ENCODE measurements at regions of chr11 and their contacts with region 1.

Region 1: GRCh38 chr11:66638177-66639065 is at the start of gene RBM4:
- DNase-seq: peak; percentile 90 to 99 (median 94)
- ATAC-seq: peak; percentile 89
- H3K4me3 ChIP-seq: peak within 1 kb of the TSS; percentile 82
- H3K4me3 Mint-ChIP-seq: peak within 1 kb of the TSS; percentile 97
- H3K27ac ChIP-seq: peak within 1 kb of the TSS; percentile 94
- H3K27ac Mint-ChIP-seq: peak within 1 kb of the TSS; percentile 89
- H3K4me1 ChIP-seq: peaks cover 62% of the 10 kb centered on the region
- H3K4me1 Mint-ChIP-seq: peaks cover 73% of the 10 kb centered on the region
- H3K27me3 ChIP-seq: no peaks in the 10 kb centered on the region
- H3K27me3 Mint-ChIP-seq: no peaks in the 10 kb centered on the region
- CTCF ChIP-seq: no peak
- total RNA-seq, gene RBM4: 194 to 197 TPM

Region 2: GRCh38 chr11:66421492-66422205 is 216.8 kb before region 1 on chr11:
- CTCF ChIA-PET with region 1: no interaction called
- POLR2A ChIA-PET with region 1: interaction called, 12 read pairs
- intact Hi-C with region 1: no loop called
- DNase-seq: peak; percentile 78 to 95 (median 86)
- ATAC-seq: peak; percentile 97
- H3K4me3 ChIP-seq: no peak overlapping the region
- H3K4me3 Mint-ChIP-seq: no peak overlapping the region
- H3K27ac ChIP-seq: no peak overlapping the region
- H3K27ac Mint-ChIP-seq: peak overlapping the region; percentile 45
- H3K4me1 ChIP-seq: peaks cover 11% of the 10 kb centered on the region
- H3K4me1 Mint-ChIP-seq: peaks cover 6% of the 10 kb centered on the region
- H3K27me3 ChIP-seq: peaks cover 26 to 37% of the 10 kb centered on the region in 2 experiments
- H3K27me3 Mint-ChIP-seq: peaks cover 40% of the 10 kb centered on the region
- CTCF ChIP-seq: no peak

Region 3: GRCh38 chr11:66568124-66568916 is 70.1 kb before region 1 on chr11 and contains the start of gene CTSF:
- CTCF ChIA-PET with region 1: no interaction called
- POLR2A ChIA-PET with region 1: interaction called, 17 read pairs
- intact Hi-C with region 1: no loop called
- DNase-seq: peak; percentile 50 to 82 (median 65)
- ATAC-seq: peak; percentile 93
- H3K4me3 ChIP-seq: peak within 1 kb of the TSS; percentile 46
- H3K4me3 Mint-ChIP-seq: peak within 1 kb of the TSS; percentile 77
- H3K27ac ChIP-seq: no peak within 1 kb of the TSS
- H3K27ac Mint-ChIP-seq: no peak within 1 kb of the TSS
- H3K4me1 ChIP-seq: peaks cover 12% of the 10 kb centered on the region
- H3K4me1 Mint-ChIP-seq: no peaks in the 10 kb centered on the region
- H3K27me3 ChIP-seq: no peaks in the 10 kb centered on the region
- H3K27me3 Mint-ChIP-seq: peaks cover 7% of the 10 kb centered on the region
- CTCF ChIP-seq: no peak
- total RNA-seq, gene CTSF: 16.0 to 16.8 TPM

Region 4: DNA sequence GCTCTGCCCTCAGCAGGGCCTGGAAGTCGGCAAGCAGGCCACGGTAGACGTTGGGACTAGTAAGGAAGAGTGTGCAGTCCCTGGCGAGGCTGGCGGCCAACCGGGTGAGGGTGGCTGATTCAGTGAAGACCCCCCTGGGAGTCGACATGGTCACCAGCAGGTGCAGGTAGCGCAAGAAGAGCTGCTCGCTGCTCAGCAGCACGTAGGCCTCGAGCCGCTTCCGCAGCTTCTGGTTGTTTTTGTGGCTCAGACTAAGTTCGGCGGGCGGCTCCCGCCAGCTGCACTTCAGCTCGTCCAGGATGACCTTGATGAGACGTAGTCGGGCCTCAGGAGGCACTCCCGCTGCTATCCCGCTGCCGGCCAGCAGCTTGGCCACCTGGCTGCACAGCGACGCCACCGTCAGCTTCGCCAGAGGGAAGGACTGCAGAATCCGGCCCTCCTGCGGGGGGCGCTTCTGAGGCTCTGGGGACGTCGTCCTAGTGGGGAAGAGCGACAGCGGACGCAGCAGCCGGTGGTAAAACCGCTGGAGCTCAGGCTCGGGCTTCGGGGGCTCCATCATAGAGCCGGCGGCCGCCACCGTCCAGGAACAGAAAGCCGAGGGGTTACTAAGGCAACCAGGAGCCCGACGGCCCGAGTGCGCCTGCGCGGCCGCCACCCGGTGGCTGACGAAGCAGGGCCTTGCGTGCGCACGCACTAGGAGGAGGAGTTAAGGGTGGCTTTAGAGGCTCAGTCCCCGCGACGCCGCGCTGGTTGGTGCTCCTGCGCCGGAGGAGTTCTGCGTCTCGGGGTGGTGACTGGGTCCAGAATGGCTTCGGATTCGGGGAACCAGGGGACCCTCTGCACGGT is 45.7 kb before region 1 on chr11 and contains the starts of genes CCDC87 and CCS:
- CTCF ChIA-PET with region 1: interaction called, 12 read pairs
- POLR2A ChIA-PET with region 1: interaction called, 20 read pairs
- intact Hi-C with region 1: loop called (anchors 1 kb)
- DNase-seq: peak; percentile 98 to 100 (median 99)
- ATAC-seq: peak; percentile 99
- H3K4me3 ChIP-seq: peak within 1 kb of the TSS; percentile 79
- H3K4me3 Mint-ChIP-seq: peak within 1 kb of the TSS; percentile 98
- H3K27ac ChIP-seq: peak within 1 kb of the TSS; percentile 58 to 81
- H3K27ac Mint-ChIP-seq: peak within 1 kb of the TSS; percentile 85
- H3K4me1 ChIP-seq: peaks cover 39% of the 10 kb centered on the region
- H3K4me1 Mint-ChIP-seq: peaks cover 23% of the 10 kb centered on the region
- H3K27me3 ChIP-seq: no peaks in the 10 kb centered on the region
- H3K27me3 Mint-ChIP-seq: no peaks in the 10 kb centered on the region
- CTCF ChIP-seq: peak; percentile 55
- total RNA-seq, gene CCDC87: 0.22 to 0.25 TPM
- total RNA-seq, gene CCS: 25.4 to 26.3 TPM

Region 5: GRCh38 chr11:66651016-66651415 is 12.6 kb after region 1 on chr11:
- CTCF ChIA-PET with region 1: interaction called, 3 read pairs
- POLR2A ChIA-PET with region 1: interaction called, 32 read pairs
- intact Hi-C with region 1: loop called in 1 of 2 experiments (anchors 2 kb)
- DNase-seq: peak in 2 of 14 experiments; percentile 35 to 49
- ATAC-seq: no peak
- H3K4me3 ChIP-seq: no peak overlapping the region
- H3K4me3 Mint-ChIP-seq: no peak overlapping the region
- H3K27ac ChIP-seq: no peak overlapping the region
- H3K27ac Mint-ChIP-seq: peak overlapping the region; percentile 64
- H3K4me1 ChIP-seq: peaks cover 38% of the 10 kb centered on the region
- H3K4me1 Mint-ChIP-seq: peaks cover 65% of the 10 kb centered on the region
- H3K27me3 ChIP-seq: no peaks in the 10 kb centered on the region
- H3K27me3 Mint-ChIP-seq: no peaks in the 10 kb centered on the region
- CTCF ChIP-seq: no peak

Region 6: DNA sequence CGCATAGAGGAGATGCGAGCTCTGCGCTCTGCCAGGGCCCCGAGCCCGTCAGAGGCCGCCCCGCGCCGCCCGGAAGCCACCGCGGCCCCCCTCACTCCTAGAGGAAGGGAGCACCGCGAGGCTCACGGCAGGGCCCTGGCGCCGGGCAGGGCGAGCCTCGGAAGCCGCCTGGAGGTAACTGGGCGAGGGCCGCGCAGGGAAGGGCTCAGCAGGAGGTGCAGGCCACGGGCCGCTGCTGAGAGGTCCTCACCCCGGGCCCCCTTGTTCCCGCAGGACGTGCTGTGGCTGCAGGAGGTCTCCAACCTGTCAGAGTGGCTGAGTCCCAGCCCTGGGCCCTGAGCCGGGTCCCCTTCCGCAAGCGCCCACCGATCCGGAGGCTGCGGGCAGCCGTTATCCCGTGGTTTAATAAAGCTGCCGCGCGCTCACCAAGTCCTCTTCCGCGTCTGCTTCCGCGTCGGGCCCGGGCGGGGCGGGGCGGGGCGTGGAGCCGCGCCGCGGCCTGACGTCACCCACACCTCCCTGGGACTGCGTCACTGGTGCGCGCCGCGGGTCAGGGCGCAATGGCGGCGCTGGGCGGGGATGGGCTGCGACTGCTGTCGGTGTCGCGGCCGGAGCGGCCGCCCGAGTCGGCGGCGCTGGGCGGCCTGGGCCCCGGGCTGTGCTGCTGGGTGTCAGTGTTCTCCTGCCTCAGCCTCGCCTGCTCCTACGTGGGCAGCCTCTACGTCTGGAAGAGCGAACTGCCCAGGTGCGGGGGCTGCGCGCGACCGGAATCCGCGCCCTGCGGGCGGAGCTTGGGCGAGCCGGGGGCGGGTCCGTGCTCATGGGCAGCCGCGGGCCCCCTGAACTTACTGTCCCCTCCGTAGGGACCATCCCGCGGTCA is 204.7 kb after region 1 on chr11 and contains the start of gene RCE1:
- CTCF ChIA-PET with region 1: no interaction called
- POLR2A ChIA-PET with region 1: interaction called, 17 read pairs
- intact Hi-C with region 1: no loop called
- DNase-seq: peak; percentile 80 to 98 (median 90)
- ATAC-seq: peak; percentile 82
- H3K4me3 ChIP-seq: peak within 1 kb of the TSS; percentile 96
- H3K4me3 Mint-ChIP-seq: peak within 1 kb of the TSS; percentile 94
- H3K27ac ChIP-seq: peak within 1 kb of the TSS; percentile 97 to 99
- H3K27ac Mint-ChIP-seq: peak within 1 kb of the TSS; percentile 96
- H3K4me1 ChIP-seq: peaks cover 49% of the 10 kb centered on the region
- H3K4me1 Mint-ChIP-seq: peaks cover 52% of the 10 kb centered on the region
- H3K27me3 ChIP-seq: no peaks in the 10 kb centered on the region
- H3K27me3 Mint-ChIP-seq: no peaks in the 10 kb centered on the region
- CTCF ChIP-seq: no peak
- total RNA-seq, gene RCE1: 60.1 to 63.0 TPM

Measured in CD4-positive, alpha-beta T cell (primary cell).